Activated T-helper 1 cell treated with anti-CD3 and anti-CD28 coated beads, Interleukin-12 subunit alpha, Interleukin-12 subunit beta, Interleukin-2, Interleukin-4 antibody, amounts not matched to agents 30 ng/mL and 10 ng/mL and 1 ng/mL, durations not matched to agents 14 hours and 24 hours and 36 hours (primary cell): ENCODE measurements at regions of chr10 and their contacts with region 1.

Region 1: GRCh38 chr10:89414146-89414878 is at the start of gene IFIT5:
- DNase-seq: peak; percentile 65
- H3K4me3 Mint-ChIP-seq: peak within 1 kb of the TSS; percentile 92
- H3K27ac Mint-ChIP-seq: peak within 1 kb of the TSS; percentile 97
- H3K4me1 Mint-ChIP-seq: peaks cover 72% of the 10 kb centered on the region
- H3K27me3 Mint-ChIP-seq: no peaks in the 10 kb centered on the region
- total RNA-seq, gene IFIT5: 8.7 TPM in 2 replicates

Region 2: GRCh38 chr10:88820748-88821389 is 593.4 kb before region 1 on chr10:
- intact Hi-C with region 1: loop called (anchors 10 kb)
- DNase-seq: no peak
- H3K4me3 Mint-ChIP-seq: no peak overlapping the region
- H3K27ac Mint-ChIP-seq: no peak overlapping the region
- H3K4me1 Mint-ChIP-seq: peaks cover 51% of the 10 kb centered on the region
- H3K27me3 Mint-ChIP-seq: peaks cover 7% of the 10 kb centered on the region

Region 3: GRCh38 chr10:88880282-88881076 is 533.8 kb before region 1 on chr10:
- intact Hi-C with region 1: loop called (anchors 10 kb)
- DNase-seq: peak; percentile 68
- H3K4me3 Mint-ChIP-seq: peak overlapping the region; percentile 98
- H3K27ac Mint-ChIP-seq: peak overlapping the region; percentile 99
- H3K4me1 Mint-ChIP-seq: peaks cover 74% of the 10 kb centered on the region
- H3K27me3 Mint-ChIP-seq: no peaks in the 10 kb centered on the region

Region 4: DNA sequence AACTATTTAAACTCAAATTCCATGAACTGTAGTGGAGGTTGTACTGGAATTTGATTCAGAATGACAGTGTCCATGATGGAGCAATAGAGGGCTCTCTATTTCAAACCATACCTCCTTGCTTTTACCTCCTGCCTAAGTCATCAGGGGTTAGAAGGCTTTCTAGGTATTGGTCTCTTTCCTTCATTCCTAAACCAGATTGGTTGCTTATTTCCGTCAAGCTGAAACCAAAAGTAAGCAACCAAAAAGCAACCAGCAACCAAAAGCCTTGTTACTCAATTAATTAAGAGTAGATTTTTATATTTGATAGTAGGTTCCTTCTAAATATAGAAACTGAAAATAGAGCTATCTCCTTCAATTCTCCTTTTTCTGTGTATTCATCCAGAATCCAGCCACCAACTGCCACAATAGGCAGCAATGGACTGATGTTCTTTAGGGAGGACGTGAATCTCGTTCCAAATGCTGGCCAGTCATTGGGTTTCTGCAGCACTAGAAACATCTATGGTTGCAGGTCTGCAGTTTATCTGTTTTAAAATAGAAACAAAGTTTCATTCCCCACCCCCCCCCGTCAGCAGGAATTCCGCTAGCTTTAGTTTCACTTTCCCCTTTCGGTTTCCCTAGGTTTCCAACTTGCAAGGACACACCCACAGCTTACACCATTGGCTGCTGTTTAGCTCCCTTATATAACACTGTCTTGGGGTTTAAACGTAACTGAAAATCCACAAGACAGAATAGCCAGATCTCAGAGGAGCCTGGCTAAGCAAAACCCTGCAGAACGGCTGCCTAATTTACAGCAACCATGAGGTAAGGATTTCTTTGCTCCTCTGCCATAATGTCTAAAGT is 22.2 kb before region 1 on chr10 and contains the start of gene IFIT1:
- intact Hi-C with region 1: loop called (anchors 1 kb)
- DNase-seq: peak; percentile 42
- H3K4me3 Mint-ChIP-seq: peak within 1 kb of the TSS; percentile 86
- H3K27ac Mint-ChIP-seq: peak within 1 kb of the TSS; percentile 78
- H3K4me1 Mint-ChIP-seq: peaks cover 44% of the 10 kb centered on the region
- H3K27me3 Mint-ChIP-seq: peaks cover 4% of the 10 kb centered on the region
- total RNA-seq, gene IFIT1: 0.39 and 0.59 TPM in 2 replicates

Region 5: DNA sequence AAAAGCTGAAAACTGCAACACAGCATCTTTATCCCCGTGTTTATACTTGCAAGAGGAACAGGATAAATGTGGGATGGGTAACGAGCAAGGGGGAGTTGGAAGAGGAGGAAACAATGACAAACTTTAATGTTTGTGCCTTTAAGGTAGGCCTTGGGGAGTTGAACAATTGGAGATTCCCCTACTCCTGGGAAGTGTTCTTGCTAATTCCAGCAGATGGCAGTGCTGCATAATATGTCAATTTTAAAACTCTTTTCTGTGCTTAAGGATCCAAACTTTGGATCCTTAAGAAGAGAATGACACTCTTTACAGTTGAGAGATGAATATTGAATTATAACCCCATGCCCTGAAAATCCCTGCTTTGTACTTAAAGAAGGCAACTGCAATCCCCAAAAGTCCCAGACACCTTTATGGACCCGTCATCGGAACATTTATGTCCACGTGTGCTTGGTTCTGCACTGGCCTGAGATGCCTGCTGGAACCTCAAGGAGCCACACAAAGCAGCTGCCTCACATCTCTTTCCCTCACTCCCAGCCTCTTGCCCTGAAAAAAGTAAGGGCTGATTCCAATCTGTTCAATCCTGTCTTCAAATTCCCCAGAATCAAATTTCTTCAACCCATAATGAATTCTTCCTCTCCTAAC is 12.0 kb after region 1 on chr10:
- intact Hi-C with region 1: loop called (anchors 1 kb)
- DNase-seq: no peak
- H3K4me3 Mint-ChIP-seq: no peak overlapping the region
- H3K27ac Mint-ChIP-seq: no peak overlapping the region
- H3K4me1 Mint-ChIP-seq: no peaks in the 10 kb centered on the region
- H3K27me3 Mint-ChIP-seq: peaks cover 5% of the 10 kb centered on the region

Region 6: DNA sequence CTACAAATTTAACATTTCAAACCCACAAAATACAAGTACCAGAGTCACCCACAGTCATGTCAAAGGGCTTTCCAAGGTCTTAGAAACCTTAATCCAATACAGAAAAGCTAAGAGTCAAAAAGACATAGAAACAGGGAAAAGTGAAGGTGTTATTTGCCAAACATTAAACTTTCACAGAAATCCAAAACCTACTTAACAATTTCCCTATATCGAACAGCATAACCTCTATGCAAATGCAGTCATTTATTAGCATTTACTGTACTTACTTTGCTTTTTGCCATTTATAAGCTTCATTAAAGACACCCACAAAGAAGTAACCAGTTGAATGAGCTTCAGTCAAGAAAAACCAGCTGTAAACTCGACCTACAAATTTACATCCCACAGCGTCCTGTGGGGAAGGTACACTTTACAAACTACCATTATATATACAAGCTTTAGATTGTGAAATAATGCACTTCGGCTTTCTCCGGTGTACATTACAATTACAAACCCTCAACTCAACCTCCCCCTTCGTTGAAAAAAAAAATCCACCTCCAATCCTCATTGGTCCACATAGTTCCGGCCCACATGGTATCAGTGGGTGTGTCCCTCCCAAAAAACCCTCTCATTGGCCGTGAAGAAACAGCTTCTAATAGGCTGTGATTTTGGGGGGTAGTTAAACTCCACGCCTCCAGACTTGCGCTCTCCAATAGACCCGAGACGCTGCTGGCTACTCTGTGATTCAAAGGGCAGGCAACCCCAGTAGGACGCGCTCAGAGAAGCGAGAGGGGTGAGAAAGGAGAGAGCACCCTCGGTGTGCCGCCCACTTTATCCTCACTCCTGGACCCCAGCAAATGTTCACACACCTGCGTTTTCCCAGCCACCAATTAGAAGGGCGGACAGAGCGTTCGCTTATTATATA is 229.4 kb after region 1 on chr10:
- intact Hi-C with region 1: loop called (anchors 2 kb)
- DNase-seq: peak; percentile 68
- H3K4me3 Mint-ChIP-seq: no peak overlapping the region
- H3K27ac Mint-ChIP-seq: no peak overlapping the region
- H3K4me1 Mint-ChIP-seq: peaks cover 7% of the 10 kb centered on the region
- H3K27me3 Mint-ChIP-seq: peaks cover 14% of the 10 kb centered on the region